CD4-positive, alpha-beta T cell (primary cell): ENCODE measurements at regions of chr1 and their contacts with region 1.

Region 1: GRCh38 chr1:89358287-89358893 is 5.5 kb upstream of the GBP6 start:
- DNase-seq: peak; percentile 73 to 90 (median 82)
- ATAC-seq: peak; percentile 98
- H3K4me3 ChIP-seq: no peak overlapping the region
- H3K4me3 Mint-ChIP-seq: no peak overlapping the region
- H3K27ac ChIP-seq: no peak overlapping the region
- H3K27ac Mint-ChIP-seq: no peak overlapping the region
- H3K4me1 ChIP-seq: peaks cover 11% of the 10 kb centered on the region
- H3K4me1 Mint-ChIP-seq: peaks cover 9% of the 10 kb centered on the region
- H3K27me3 ChIP-seq: no peaks in the 10 kb centered on the region
- H3K27me3 Mint-ChIP-seq: no peaks in the 10 kb centered on the region
- CTCF ChIP-seq: peak; percentile 87

Region 2: DNA sequence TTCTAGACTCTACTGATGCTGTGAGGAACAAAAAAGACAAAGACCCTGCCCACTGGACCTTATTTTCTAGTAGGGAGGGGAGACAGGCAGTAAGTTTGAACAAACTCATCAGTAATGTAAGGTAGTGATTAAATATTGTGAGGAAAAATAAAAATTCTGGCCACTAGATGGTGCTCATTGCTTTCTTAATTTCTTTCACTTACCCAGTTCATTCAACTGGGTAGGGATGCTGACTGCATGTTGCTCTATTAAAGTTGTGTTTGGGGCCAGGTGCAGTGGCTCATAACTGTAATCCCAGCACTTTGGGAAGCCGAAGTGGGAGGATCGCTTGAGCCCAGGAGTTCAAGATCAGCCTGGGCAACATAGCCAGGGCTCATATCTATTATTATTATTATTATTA is 359.7 kb before region 1 on chr1:
- CTCF ChIA-PET with region 1: interaction called, 7 read pairs
- POLR2A ChIA-PET with region 1: no interaction called
- intact Hi-C with region 1: loop called (anchors 1 kb)
- DNase-seq: peak in 4 of 14 experiments; percentile 32 to 85 (median 84)
- ATAC-seq: peak; percentile 88
- H3K4me3 ChIP-seq: no peak overlapping the region
- H3K4me3 Mint-ChIP-seq: peak overlapping the region; percentile 50
- H3K27ac ChIP-seq: no peak overlapping the region
- H3K27ac Mint-ChIP-seq: no peak overlapping the region
- H3K4me1 ChIP-seq: peaks cover 12% of the 10 kb centered on the region
- H3K4me1 Mint-ChIP-seq: peaks cover 40% of the 10 kb centered on the region
- H3K27me3 ChIP-seq: no peaks in the 10 kb centered on the region
- H3K27me3 Mint-ChIP-seq: no peaks in the 10 kb centered on the region
- CTCF ChIP-seq: peak; percentile 64

Region 3: DNA sequence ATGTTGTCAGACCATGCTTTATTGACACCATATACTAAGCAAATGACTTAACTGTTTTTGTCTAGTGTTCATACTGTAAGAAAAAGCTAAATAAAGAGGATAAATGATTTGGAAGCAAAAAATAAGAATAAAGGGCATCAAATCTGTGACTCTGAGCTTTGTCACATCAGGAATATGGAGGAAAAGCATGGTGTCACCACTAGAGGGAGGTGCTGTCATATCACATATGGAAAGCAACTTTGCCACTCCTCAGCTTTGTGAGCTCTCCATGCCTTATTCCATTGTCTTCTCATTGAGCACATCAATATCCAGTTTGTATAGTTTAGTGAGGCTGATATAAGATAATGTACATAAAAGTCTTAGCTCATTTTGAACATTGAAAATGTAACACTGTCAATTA is 272.6 kb before region 1 on chr1:
- CTCF ChIA-PET with region 1: interaction called, 23 read pairs
- POLR2A ChIA-PET with region 1: interaction called, 9 read pairs
- intact Hi-C with region 1: loop called (anchors 1 kb)
- DNase-seq: peak in 9 of 14 experiments; percentile 13 to 79 (median 48)
- ATAC-seq: peak; percentile 77
- H3K4me3 ChIP-seq: no peak overlapping the region
- H3K4me3 Mint-ChIP-seq: no peak overlapping the region
- H3K27ac ChIP-seq: no peak overlapping the region
- H3K27ac Mint-ChIP-seq: no peak overlapping the region
- H3K4me1 ChIP-seq: no peaks in the 10 kb centered on the region
- H3K4me1 Mint-ChIP-seq: no peaks in the 10 kb centered on the region
- H3K27me3 ChIP-seq: no peaks in the 10 kb centered on the region
- H3K27me3 Mint-ChIP-seq: no peaks in the 10 kb centered on the region
- CTCF ChIP-seq: peak; percentile 85

Region 4: GRCh38 chr1:89198491-89199072 is 159.8 kb before region 1 on chr1 and contains the start of gene GBP4:
- CTCF ChIA-PET with region 1: interaction called, 5 read pairs
- POLR2A ChIA-PET with region 1: interaction called, 17 read pairs
- intact Hi-C with region 1: loop called (anchors 1 to 5 kb)
- DNase-seq: peak; percentile 19 to 83 (median 53)
- ATAC-seq: peak; percentile 60
- H3K4me3 ChIP-seq: peak within 1 kb of the TSS; percentile 75
- H3K4me3 Mint-ChIP-seq: peak within 1 kb of the TSS; percentile 95
- H3K27ac ChIP-seq: peak within 1 kb of the TSS; percentile 64 to 84
- H3K27ac Mint-ChIP-seq: peak within 1 kb of the TSS; percentile 89
- H3K4me1 ChIP-seq: peaks cover 27% of the 10 kb centered on the region
- H3K4me1 Mint-ChIP-seq: peaks cover 85% of the 10 kb centered on the region
- H3K27me3 ChIP-seq: no peaks in the 10 kb centered on the region
- H3K27me3 Mint-ChIP-seq: no peaks in the 10 kb centered on the region
- CTCF ChIP-seq: no peak
- total RNA-seq, gene GBP4: 11.3 to 11.7 TPM

Region 5: GRCh38 chr1:89286549-89287180 is 71.7 kb before region 1 on chr1:
- CTCF ChIA-PET with region 1: no interaction called
- POLR2A ChIA-PET with region 1: interaction called, 20 read pairs
- intact Hi-C with region 1: no loop called
- DNase-seq: peak in 3 of 14 experiments; percentile 39 to 82 (median 48)
- ATAC-seq: peak; percentile 76
- H3K4me3 ChIP-seq: peak overlapping the region; percentile 28
- H3K4me3 Mint-ChIP-seq: peak overlapping the region; percentile 62
- H3K27ac ChIP-seq: peak overlapping the region; percentile 53 to 54
- H3K27ac Mint-ChIP-seq: peak overlapping the region; percentile 78
- H3K4me1 ChIP-seq: peaks cover 45% of the 10 kb centered on the region
- H3K4me1 Mint-ChIP-seq: peaks cover 61% of the 10 kb centered on the region
- H3K27me3 ChIP-seq: no peaks in the 10 kb centered on the region
- H3K27me3 Mint-ChIP-seq: no peaks in the 10 kb centered on the region
- CTCF ChIP-seq: no peak

Region 6: DNA sequence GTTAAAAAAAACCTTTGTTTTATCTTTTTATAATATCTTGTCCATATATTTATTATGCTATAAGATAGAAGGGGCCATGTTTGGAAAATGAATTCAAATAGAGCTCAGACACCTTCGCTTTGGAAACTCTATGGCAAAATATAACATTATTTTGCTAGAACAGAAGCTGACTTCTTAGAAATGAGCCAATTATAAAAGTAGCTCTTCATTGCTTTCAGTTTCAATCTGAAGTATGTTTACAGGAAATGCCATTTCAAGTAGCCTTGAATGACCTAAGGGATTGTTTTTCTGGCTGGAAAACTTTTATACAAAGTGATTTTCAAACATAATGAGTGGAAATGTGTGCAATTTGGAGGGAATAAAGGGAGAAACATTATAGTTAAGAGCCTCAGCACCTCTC is 47.9 kb before region 1 on chr1:
- CTCF ChIA-PET with region 1: no interaction called
- POLR2A ChIA-PET with region 1: interaction called, 20 read pairs
- intact Hi-C with region 1: no loop called
- DNase-seq: peak in 3 of 14 experiments; percentile 14 to 80 (median 27)
- ATAC-seq: peak; percentile 52
- H3K4me3 ChIP-seq: peak overlapping the region; percentile 11
- H3K4me3 Mint-ChIP-seq: peak overlapping the region; percentile 47
- H3K27ac ChIP-seq: peak overlapping the region; percentile 24 to 38
- H3K27ac Mint-ChIP-seq: peak overlapping the region; percentile 78
- H3K4me1 ChIP-seq: peaks cover 31% of the 10 kb centered on the region
- H3K4me1 Mint-ChIP-seq: peaks cover 42% of the 10 kb centered on the region
- H3K27me3 ChIP-seq: no peaks in the 10 kb centered on the region
- H3K27me3 Mint-ChIP-seq: no peaks in the 10 kb centered on the region
- CTCF ChIP-seq: no peak

Region 7: GRCh38 chr1:89378001-89378400 is 19.6 kb after region 1 on chr1:
- CTCF ChIA-PET with region 1: no interaction called
- POLR2A ChIA-PET with region 1: no interaction called
- intact Hi-C with region 1: no loop called
- DNase-seq: no peak
- ATAC-seq: no peak
- H3K4me3 ChIP-seq: no peak overlapping the region
- H3K4me3 Mint-ChIP-seq: no peak overlapping the region
- H3K27ac ChIP-seq: no peak overlapping the region
- H3K27ac Mint-ChIP-seq: no peak overlapping the region
- H3K4me1 ChIP-seq: no peaks in the 10 kb centered on the region
- H3K4me1 Mint-ChIP-seq: no peaks in the 10 kb centered on the region
- H3K27me3 ChIP-seq: no peaks in the 10 kb centered on the region
- H3K27me3 Mint-ChIP-seq: no peaks in the 10 kb centered on the region
- CTCF ChIP-seq: no peak